ENCODE measurements at regions of chr16 and their contacts with region 1.

Region 1: GRCh38 chr16:27549859-27550581 is at the starts of genes GTF3C1 and KATNIP:
- DNase-seq: peak; percentile 100
- H3K4me3 ChIP-seq: peak within 1 kb of the TSS; percentile 71 to 100 (median 90)
- H3K27ac ChIP-seq: peak within 1 kb of the TSS in 51 of 59 donors; percentile 7 to 87 (median 70)
- H3K27me3 ChIP-seq: no peaks in the 10 kb centered on the region
- CTCF ChIP-seq: peak in 21 of 56 donors; percentile 2 to 50 (median 19)
- total RNA-seq, gene GTF3C1: 73.8 to 145 (median 105) TPM
- total RNA-seq, gene KATNIP: 21.9 to 55.1 (median 35.8) TPM

Region 2: DNA sequence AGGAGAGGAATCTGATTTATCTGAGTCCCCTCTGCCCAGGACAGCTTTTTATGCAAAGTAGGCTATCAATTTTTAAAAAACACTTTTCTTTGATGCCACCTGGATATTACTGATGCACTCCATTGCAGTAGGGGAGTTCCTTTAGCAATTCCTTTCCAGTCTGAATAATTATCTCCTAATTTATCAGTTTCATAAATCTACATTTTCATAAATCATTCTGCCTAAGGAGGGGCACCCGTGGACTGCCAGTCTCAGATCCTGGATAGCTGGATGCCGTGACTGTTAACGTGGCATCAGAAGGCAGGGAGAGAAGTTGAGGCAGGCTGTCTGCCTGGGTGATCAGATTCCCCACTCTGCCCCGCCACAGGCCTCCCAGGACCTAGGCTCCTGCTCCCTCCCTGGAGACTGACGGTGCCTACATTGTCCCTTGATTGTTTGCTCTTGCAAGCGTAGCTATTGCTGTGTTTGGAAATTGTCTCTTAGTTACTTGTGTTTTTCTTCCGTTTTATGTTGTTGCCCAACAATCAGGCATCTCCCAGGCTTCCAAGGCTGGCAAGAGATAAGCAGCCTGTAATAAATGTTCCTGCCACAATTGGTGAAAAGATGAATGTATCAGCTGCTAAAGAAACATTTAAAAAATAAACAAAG is 75.2 kb after region 1 on chr16:
- intact Hi-C with region 1: loop called in 1 of 2 experiments (anchors 10 kb)
- DNase-seq: no peak
- H3K4me3 ChIP-seq: no peak overlapping the region
- H3K27ac ChIP-seq: no peak overlapping the region
- H3K27me3 ChIP-seq: no peaks in the 10 kb centered on the region
- CTCF ChIP-seq: no peak

Measured in dorsolateral prefrontal cortex (tissue), 120 donors.